Activated CD4-positive, alpha-beta T cell treated with anti-CD3 and anti-CD28 coated beads, Interleukin-2, amount 10 ng/mL, durations not matched to agents 7 days and 5 days (primary cell): ENCODE measurements at regions of chr12 and their contacts with region 1.

Region 1: GRCh38 chr12:57687862-57688261 is 6.1 kb upstream of the OS9 start:
- DNase-seq: no peak
- H3K4me3 Mint-ChIP-seq: no peak overlapping the region
- H3K27ac Mint-ChIP-seq: no peak overlapping the region
- H3K4me1 Mint-ChIP-seq: no peaks in the 10 kb centered on the region
- H3K27me3 Mint-ChIP-seq: peaks cover 62% of the 10 kb centered on the region

Region 2: GRCh38 chr12:57657744-57658143 is 30.1 kb before region 1 on chr12:
- CTCF ChIA-PET with region 1: no interaction called
- POLR2A ChIA-PET with region 1: interaction called, 10 read pairs
- DNase-seq: no peak
- H3K4me3 Mint-ChIP-seq: no peak overlapping the region
- H3K27ac Mint-ChIP-seq: no peak overlapping the region
- H3K4me1 Mint-ChIP-seq: no peaks in the 10 kb centered on the region
- H3K27me3 Mint-ChIP-seq: peaks cover 6% of the 10 kb centered on the region